Activated CD8-positive, alpha-beta T cell treated with anti-CD3 and anti-CD28 coated beads for 36 hours (primary cell): ENCODE measurements at regions of chr14 and their contacts with region 1.

Region 1: GRCh38 chr14:91177073-91178034 is 63.5 kb downstream of the DGLUCY start:
- DNase-seq: peak; percentile 84
- ATAC-seq: peak; percentile 95
- H3K4me3 Mint-ChIP-seq: no peak overlapping the region
- H3K27ac Mint-ChIP-seq: peak overlapping the region; percentile 89
- H3K4me1 Mint-ChIP-seq: peaks cover 16% of the 10 kb centered on the region
- H3K27me3 Mint-ChIP-seq: no peaks in the 10 kb centered on the region
- CTCF ChIP-seq: peak; percentile 90

Region 2: GRCh38 chr14:90903101-90903500 is 274.3 kb before region 1 on chr14:
- CTCF ChIA-PET with region 1: interaction called, 175 read pairs
- POLR2A ChIA-PET with region 1: interaction called, 5 read pairs
- intact Hi-C with region 1: loop called (anchors 1 kb)
- DNase-seq: peak; percentile 77
- ATAC-seq: peak; percentile 84
- H3K4me3 Mint-ChIP-seq: no peak overlapping the region
- H3K27ac Mint-ChIP-seq: no peak overlapping the region
- H3K4me1 Mint-ChIP-seq: peaks cover 19% of the 10 kb centered on the region
- H3K27me3 Mint-ChIP-seq: no peaks in the 10 kb centered on the region
- CTCF ChIP-seq: peak; percentile 92

Region 3: GRCh38 chr14:91138511-91139359 is 38.6 kb before region 1 on chr14:
- CTCF ChIA-PET with region 1: interaction called, 24 read pairs
- POLR2A ChIA-PET with region 1: no interaction called
- intact Hi-C with region 1: no loop called
- DNase-seq: peak; percentile 75
- ATAC-seq: peak; percentile 80
- H3K4me3 Mint-ChIP-seq: no peak overlapping the region
- H3K27ac Mint-ChIP-seq: peak overlapping the region; percentile 55
- H3K4me1 Mint-ChIP-seq: peaks cover 44% of the 10 kb centered on the region
- H3K27me3 Mint-ChIP-seq: no peaks in the 10 kb centered on the region
- CTCF ChIP-seq: peak; percentile 83

Region 4: DNA sequence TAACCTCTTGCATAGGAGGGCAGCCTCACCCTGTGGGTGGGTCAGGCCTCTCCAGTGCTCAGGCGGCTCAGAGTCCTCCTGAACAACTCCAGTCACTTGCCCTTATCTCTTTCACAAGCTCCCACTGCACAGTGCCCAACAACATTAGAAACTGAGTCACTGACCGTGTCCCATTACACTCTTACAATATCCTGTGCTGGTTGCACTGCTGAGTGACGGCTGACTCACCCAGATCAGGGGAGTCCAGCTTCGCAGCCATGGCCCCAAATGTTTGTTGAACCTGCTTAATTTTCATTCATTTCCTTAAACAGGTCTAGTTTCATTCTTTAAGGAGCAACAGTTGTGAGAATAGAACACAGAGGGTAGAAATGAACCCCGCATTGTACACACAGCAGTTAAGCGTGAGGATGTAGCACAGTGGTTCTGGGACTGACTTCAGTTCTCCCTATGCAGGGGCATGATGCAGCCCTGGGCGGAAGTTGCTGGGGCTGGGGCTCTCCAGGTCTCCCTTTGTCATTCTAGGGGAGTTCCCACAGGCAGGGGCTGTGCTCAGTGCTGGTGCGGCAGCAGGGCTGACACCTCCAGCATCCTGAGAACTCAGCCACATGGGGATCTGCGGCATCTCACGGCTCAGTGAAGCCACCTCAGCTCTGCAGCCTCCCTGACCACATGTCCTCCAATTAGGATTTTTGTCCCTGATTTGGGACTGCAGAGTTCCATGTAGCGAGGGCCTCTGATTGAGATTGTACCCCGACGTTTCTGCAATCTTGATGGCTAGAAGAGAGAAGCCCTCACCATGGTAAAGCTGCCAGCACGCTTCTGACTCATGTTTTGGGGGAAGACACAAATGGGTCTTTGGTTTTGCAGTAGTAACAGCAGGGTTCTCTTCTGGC is 51.0 kb after region 1 on chr14:
- CTCF ChIA-PET with region 1: interaction called, 12 read pairs
- POLR2A ChIA-PET with region 1: interaction called, 7 read pairs
- intact Hi-C with region 1: loop called (anchors 5 kb)
- DNase-seq: peak; percentile 96
- ATAC-seq: peak; percentile 84
- H3K4me3 Mint-ChIP-seq: peak overlapping the region; percentile 68
- H3K27ac Mint-ChIP-seq: peak overlapping the region; percentile 99
- H3K4me1 Mint-ChIP-seq: peaks cover 87% of the 10 kb centered on the region
- H3K27me3 Mint-ChIP-seq: no peaks in the 10 kb centered on the region
- CTCF ChIP-seq: no peak

Region 5: DNA sequence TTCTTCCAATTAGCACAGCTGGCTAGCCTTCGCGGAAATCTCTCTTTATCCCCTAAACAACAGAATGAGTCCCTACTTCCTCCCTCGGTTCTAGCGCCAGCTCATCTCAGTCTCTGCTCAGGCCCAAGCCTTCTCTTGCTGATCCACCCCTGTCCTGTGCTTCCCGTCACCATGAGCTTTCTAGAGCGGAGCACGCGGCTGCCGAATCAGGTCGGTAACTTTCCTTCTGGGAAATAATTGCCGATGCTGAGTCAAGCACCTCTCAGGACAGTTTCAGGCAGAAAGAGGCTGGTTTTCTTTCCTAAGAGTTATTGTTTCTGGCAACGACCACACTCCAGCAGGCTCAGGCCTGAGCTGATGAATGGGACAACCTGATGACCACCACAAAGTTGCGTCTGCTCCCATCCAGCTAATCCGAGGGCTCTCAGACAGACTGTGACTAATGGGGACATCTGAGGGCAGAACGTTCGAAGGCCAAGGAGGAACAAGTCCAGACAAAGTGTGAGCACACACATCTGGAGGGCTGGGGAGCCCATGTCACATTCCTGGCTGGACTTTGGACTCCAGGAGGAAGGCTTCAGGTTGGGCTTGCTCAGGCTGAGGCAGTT is 80.8 kb after region 1 on chr14:
- CTCF ChIA-PET with region 1: interaction called, 32 read pairs
- POLR2A ChIA-PET with region 1: interaction called, 4 read pairs
- intact Hi-C with region 1: no loop called
- DNase-seq: no peak
- ATAC-seq: no peak
- H3K4me3 Mint-ChIP-seq: no peak overlapping the region
- H3K27ac Mint-ChIP-seq: no peak overlapping the region
- H3K4me1 Mint-ChIP-seq: peaks cover 54% of the 10 kb centered on the region
- H3K27me3 Mint-ChIP-seq: peaks cover 1% of the 10 kb centered on the region
- CTCF ChIP-seq: no peak

Region 6: DNA sequence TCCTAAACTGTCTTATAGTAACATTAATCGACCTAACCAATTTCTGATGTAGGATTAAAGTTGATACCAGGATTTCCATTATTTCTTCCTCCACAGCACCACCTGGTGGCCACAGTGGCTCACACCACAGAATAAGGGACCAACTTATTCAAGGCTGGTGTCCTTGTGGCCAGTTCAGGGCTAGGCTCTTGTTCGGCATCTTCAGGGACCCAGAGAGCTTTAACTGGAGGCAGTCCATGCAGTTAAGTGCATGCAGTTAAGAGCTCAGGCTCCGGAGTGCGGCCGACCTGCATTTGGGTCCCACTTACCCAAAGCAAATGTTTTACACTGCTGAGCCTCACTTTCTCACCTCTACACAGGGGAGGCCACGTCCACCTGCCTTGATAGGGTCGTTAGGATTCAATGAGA is 109.2 kb after region 1 on chr14:
- CTCF ChIA-PET with region 1: interaction called, 215 read pairs
- POLR2A ChIA-PET with region 1: interaction called, 5 read pairs
- intact Hi-C with region 1: loop called (anchors 1 kb)
- DNase-seq: peak; percentile 90
- ATAC-seq: peak; percentile 85
- H3K4me3 Mint-ChIP-seq: no peak overlapping the region
- H3K27ac Mint-ChIP-seq: peak overlapping the region; percentile 82
- H3K4me1 Mint-ChIP-seq: peaks cover 15% of the 10 kb centered on the region
- H3K27me3 Mint-ChIP-seq: no peaks in the 10 kb centered on the region
- CTCF ChIP-seq: peak; percentile 96

Region 7: GRCh38 chr14:91354979-91355685 is 177.8 kb after region 1 on chr14:
- CTCF ChIA-PET with region 1: no interaction called
- POLR2A ChIA-PET with region 1: no interaction called
- intact Hi-C with region 1: no loop called
- DNase-seq: peak; percentile 76
- ATAC-seq: peak; percentile 44
- H3K4me3 Mint-ChIP-seq: peak overlapping the region; percentile 66
- H3K27ac Mint-ChIP-seq: peak overlapping the region; percentile 80
- H3K4me1 Mint-ChIP-seq: peaks cover 93% of the 10 kb centered on the region
- H3K27me3 Mint-ChIP-seq: no peaks in the 10 kb centered on the region
- CTCF ChIP-seq: peak; percentile 93

Region 8: GRCh38 chr14:91554535-91555332 is 377.4 kb after region 1 on chr14:
- CTCF ChIA-PET with region 1: no interaction called
- POLR2A ChIA-PET with region 1: no interaction called
- intact Hi-C with region 1: no loop called
- DNase-seq: no peak
- ATAC-seq: no peak
- H3K4me3 Mint-ChIP-seq: no peak overlapping the region
- H3K27ac Mint-ChIP-seq: no peak overlapping the region
- H3K4me1 Mint-ChIP-seq: no peaks in the 10 kb centered on the region
- H3K27me3 Mint-ChIP-seq: no peaks in the 10 kb centered on the region
- CTCF ChIP-seq: no peak